GM10248 (cell line): ENCODE measurements at regions of chr11 and their contacts with region 1.

Region 1: DNA sequence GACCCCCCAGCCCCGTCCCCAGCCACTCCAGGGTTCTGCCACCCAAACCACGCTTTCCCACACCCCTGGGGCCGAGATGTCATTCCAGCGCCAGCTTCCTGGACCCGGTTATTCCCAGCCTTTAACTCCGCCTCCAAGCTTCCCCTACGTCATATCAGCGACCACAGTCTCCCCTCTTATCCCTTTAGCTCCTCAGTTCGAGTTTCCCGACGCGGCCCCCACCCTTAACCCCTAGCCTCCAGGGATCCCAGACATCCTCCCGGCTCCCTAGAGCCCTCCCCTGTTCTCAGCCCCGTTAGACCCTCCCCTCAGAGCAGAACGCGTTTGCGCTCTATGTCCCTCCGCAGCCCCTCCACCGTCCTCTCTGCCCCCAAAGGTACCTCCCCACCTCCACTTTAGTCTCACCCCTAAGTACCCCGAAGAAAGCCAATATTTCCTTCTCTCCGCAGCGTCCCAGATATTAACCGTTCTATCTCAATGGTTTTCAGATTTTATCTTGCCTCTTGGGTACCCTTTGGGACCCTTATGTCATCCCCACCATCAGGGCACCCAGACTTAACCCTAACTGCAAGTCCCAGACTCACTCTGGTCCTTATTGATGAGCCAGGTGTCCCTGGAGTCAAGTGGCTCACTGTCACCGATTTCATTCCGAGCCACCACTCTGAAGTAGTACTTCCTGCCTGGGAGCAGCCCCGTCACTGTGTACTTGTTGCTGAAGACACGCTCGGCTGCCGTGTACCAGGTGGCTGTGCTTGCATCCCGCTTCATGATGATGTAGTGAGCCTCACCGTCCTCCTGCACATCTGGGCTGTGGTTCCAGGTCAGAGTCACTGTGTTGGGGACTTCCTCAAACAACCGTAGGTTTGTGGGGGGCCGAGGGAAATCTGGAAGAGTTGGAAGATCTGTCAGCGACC is 8.0 kb downstream of the TMEM86A start:
- DNase-seq: peak; percentile 61
- CTCF ChIP-seq: no peak

Region 2: DNA sequence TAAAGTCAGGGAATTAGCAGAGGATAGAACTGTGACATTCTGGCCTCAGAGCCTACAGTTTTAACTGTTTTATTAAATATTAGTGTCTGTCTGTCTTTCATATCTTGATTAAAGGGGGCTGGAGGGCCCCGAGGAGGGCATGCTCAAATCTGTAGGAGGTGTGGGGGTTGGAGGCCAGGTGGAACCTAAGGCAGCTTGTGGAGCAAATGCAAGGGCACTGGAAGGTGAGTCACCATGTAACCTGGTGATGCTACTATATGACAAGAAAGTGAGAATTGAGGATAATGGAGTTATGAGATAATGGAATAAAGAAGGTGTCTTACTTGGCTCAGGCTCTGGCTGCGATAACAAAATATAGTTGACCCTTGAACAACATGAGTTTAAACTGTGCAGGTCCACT is 35.3 kb before region 1 on chr11:
- CTCF ChIA-PET with region 1: no interaction called
- POLR2A ChIA-PET with region 1: no interaction called
- DNase-seq: no peak
- CTCF ChIP-seq: no peak

Region 3: DNA sequence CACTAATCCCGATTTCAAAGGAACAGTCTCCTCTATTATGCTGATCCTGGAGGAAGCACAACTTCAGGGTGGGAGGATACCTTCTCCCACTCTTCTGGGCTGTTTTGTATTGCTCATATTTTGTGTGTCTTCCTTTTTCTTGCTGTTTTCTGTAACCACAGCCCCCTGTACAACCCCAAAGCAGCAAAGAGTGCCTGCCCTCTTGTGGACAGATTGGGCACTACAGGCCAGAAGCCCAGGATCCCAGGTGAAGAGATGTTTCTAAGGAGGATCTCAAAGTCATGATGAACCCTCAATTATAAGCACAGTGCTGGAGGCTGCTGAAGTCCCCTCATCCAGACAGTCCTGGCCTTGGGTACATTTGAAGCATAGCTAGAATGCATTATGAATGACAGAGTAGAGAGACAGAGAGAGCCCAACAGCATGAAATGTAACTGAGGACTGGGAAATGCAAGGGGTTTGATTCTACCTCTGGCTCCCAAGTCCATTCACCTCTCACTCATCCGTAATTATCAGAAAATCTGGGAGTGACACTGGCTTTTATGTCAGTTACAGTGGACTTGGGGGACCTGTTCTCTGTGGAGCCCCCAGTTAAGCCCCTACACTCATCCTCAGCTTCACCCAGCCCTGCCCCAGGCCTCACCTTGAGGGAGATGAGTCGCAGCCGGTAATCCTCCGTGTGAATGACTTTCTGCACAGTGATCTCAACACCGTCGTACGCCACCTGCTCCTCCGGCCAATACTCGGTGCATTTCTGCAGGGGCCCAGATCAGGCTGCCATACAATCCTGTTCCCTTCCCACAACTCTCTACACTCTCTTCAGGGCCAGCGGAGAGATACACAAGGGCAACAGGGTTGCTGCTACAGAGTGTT is 25.6 kb after region 1 on chr11:
- CTCF ChIA-PET with region 1: interaction called, 26 read pairs
- POLR2A ChIA-PET with region 1: no interaction called
- DNase-seq: peak; percentile 75
- CTCF ChIP-seq: peak; percentile 98